Sigmoid colon (tissue), 7 donors: ENCODE measurements at regions of chr10 and their contacts with region 1.

Region 1: DNA sequence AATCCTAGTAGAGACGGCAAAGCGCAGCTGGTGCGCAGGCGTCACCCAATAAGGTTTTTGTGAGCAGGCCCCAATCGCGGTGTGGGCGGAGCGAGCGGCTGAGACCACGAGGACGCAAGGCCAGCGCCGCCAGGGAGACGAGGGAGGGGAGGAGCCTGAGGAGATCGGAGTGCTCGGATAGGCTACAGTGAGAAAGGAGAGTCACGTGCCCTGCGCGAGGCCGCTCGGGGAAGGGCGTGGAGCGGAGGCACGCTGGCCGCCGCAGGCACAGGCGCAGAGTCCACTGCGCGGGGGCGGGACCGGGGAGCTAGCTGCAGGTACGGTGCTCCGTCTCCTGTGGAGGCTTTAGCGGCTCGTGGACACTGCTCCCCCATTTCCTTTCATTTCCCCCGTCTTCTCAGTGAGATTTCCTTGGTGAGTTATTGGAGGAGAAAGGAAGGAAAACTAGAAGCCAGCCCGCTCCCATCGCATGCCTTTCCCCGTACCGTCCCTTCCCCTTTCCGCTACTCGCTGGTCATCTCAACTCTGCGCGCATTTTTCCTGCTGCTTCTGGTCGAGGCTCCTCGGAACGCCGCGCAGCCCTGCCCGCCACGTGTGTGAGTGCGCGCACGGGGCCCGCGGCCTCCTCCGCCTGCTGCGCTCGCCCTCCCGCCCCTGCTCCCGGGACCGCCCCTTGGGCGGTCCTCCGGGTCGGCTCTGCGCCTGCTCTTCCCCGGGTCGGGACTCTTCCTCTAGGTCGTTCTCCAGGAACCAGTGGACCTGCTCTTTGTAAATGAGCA is at the start of gene THNSL1:
- DNase-seq: peak; percentile 99
- H3K4me3 ChIP-seq: peak within 1 kb of the TSS; percentile 54 to 70 (median 68)
- H3K27ac ChIP-seq: peak within 1 kb of the TSS; percentile 86 to 96 (median 91)
- H3K4me1 ChIP-seq: peaks cover 0 to 16% (median 9%) of the 10 kb centered on the region in 4 donors
- H3K27me3 ChIP-seq: no peaks in the 10 kb centered on the region
- CTCF ChIP-seq: no peak
- EP300 ChIP-seq: peak in 1 of 4 donors; percentile 37
- POLR2A ChIP-seq: peak; percentile 54 to 77
- total RNA-seq, gene THNSL1: 0.36 to 1.9 (median 0.77) TPM

Region 2: GRCh38 chr10:23095404-23095965 is 1921.1 kb before region 1 on chr10 and contains the start of gene MSRB2:
- intact Hi-C with region 1: loop called (anchors 10 kb)
- DNase-seq: peak; percentile 98
- H3K4me3 ChIP-seq: peak within 1 kb of the TSS; percentile 62 to 95 (median 79)
- H3K27ac ChIP-seq: peak within 1 kb of the TSS; percentile 90 to 99 (median 96)
- H3K4me1 ChIP-seq: peaks cover 0 to 17% (median 12%) of the 10 kb centered on the region in 4 donors
- H3K27me3 ChIP-seq: no peaks in the 10 kb centered on the region
- CTCF ChIP-seq: no peak
- EP300 ChIP-seq: no peak
- POLR2A ChIP-seq: peak; percentile 45 to 55
- total RNA-seq, gene MSRB2: 32.7 to 56.3 (median 47.0) TPM

Region 3: GRCh38 chr10:24617771-24618391 is 398.7 kb before region 1 on chr10:
- intact Hi-C with region 1: no loop called
- DNase-seq: peak; percentile 71
- H3K4me3 ChIP-seq: no peak overlapping the region
- H3K27ac ChIP-seq: no peak overlapping the region
- H3K4me1 ChIP-seq: peaks cover 0 to 3% (median 0%) of the 10 kb centered on the region in 4 donors
- H3K27me3 ChIP-seq: no peaks in the 10 kb centered on the region
- CTCF ChIP-seq: peak in 3 of 4 experiments; percentile 64 to 88 (median 65)
- EP300 ChIP-seq: no peak
- POLR2A ChIP-seq: no peak

Region 4: GRCh38 chr10:24724381-24725228 is 292.0 kb before region 1 on chr10:
- intact Hi-C with region 1: loop called (anchors 2 kb)
- DNase-seq: peak; percentile 99
- H3K4me3 ChIP-seq: peak overlapping the region; percentile 54 to 92 (median 90)
- H3K27ac ChIP-seq: peak overlapping the region; percentile 91 to 99 (median 98)
- H3K4me1 ChIP-seq: peaks cover 0 to 32% (median 17%) of the 10 kb centered on the region in 4 donors
- H3K27me3 ChIP-seq: no peaks in the 10 kb centered on the region
- CTCF ChIP-seq: peak in 1 of 4 experiments; percentile 18
- EP300 ChIP-seq: no peak
- POLR2A ChIP-seq: peak; percentile 85 to 95

Region 5: GRCh38 chr10:24952707-24953645 is 63.6 kb before region 1 on chr10:
- intact Hi-C with region 1: loop called (anchors 5 kb)
- DNase-seq: peak; percentile 78
- H3K4me3 ChIP-seq: peak overlapping the region; percentile 50 to 78 (median 73)
- H3K27ac ChIP-seq: peak overlapping the region; percentile 74 to 87 (median 82)
- H3K4me1 ChIP-seq: peaks cover 0 to 31% (median 25%) of the 10 kb centered on the region in 4 donors
- H3K27me3 ChIP-seq: no peaks in the 10 kb centered on the region
- CTCF ChIP-seq: peak in 1 of 4 experiments; percentile 42
- EP300 ChIP-seq: no peak
- POLR2A ChIP-seq: no peak

Region 6: DNA sequence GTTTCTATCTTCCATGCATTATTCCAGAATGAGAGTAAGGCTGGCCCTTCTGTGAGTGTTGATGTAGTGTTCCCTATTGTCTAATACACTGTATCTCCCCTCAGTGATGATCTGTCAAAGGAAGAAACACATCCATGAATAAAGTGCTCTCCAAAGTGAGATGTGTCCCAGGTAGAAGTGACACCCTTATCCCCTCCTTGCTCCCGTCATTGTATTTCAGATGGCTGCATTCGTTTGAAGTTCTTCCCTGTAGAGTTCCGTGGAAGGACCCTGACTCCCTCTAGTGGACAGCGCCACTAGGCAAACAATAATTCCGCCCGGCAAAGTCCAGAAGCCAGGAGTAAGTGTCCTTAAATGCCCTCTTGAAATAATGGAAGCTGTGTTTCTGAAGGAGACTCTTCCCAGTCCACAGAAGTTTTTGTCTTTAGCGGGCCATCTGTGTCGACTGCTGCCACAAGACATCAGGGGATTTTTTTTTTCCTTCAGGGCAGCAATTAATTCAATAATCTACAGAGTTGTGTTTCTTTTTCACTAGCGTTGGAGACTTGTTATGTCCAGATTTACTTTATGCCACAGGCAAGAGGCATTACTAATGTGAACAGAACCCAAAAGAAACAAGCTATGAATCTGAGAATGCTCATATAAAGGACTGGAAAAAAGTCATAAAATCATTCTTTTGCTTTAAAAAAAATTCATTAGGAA is 64.5 kb after region 1 on chr10:
- intact Hi-C with region 1: loop called (anchors 5 kb)
- DNase-seq: peak; percentile 88
- H3K4me3 ChIP-seq: no peak overlapping the region
- H3K27ac ChIP-seq: peak overlapping the region in 3 of 4 donors; percentile 47 to 55 (median 48)
- H3K4me1 ChIP-seq: peaks cover 0 to 19% (median 11%) of the 10 kb centered on the region in 4 donors
- H3K27me3 ChIP-seq: no peaks in the 10 kb centered on the region
- CTCF ChIP-seq: peak; percentile 75 to 87 (median 83)
- EP300 ChIP-seq: no peak
- POLR2A ChIP-seq: no peak

Region 7: GRCh38 chr10:25101461-25102146 is 85.0 kb after region 1 on chr10:
- intact Hi-C with region 1: no loop called
- DNase-seq: no peak
- H3K4me3 ChIP-seq: no peak overlapping the region
- H3K27ac ChIP-seq: no peak overlapping the region
- H3K4me1 ChIP-seq: no peaks in the 10 kb centered on the region
- H3K27me3 ChIP-seq: no peaks in the 10 kb centered on the region
- CTCF ChIP-seq: no peak
- EP300 ChIP-seq: no peak
- POLR2A ChIP-seq: no peak

Region 8: DNA sequence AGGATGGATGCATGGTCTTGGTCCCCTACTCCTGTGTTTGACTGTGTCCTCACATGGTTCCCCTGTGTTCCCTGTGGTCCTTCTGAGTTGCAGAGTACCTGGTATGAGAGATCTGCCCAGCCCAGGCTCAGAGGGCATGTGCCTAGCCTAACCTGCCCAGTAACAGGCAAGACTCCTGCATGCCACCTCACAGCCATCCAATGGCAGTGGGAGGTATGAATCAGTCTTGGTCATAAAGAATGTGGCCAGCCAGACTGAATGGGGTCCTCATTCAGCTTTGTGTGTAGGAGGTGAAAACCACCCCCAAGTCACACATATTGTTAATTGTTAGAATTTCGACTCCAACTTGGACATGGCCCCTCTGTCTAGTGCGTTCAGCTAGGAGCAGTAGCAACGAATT is 141.1 kb after region 1 on chr10:
- intact Hi-C with region 1: no loop called
- DNase-seq: no peak
- H3K4me3 ChIP-seq: no peak overlapping the region
- H3K27ac ChIP-seq: no peak overlapping the region
- H3K4me1 ChIP-seq: no peaks in the 10 kb centered on the region
- H3K27me3 ChIP-seq: no peaks in the 10 kb centered on the region
- CTCF ChIP-seq: no peak
- EP300 ChIP-seq: no peak
- POLR2A ChIP-seq: no peak